Activated CD4-positive, alpha-beta T cell treated with anti-CD3 and anti-CD28 coated beads, Interleukin-2, amount 10 ng/mL, durations not matched to agents 7 days and 5 days (primary cell): ENCODE measurements at regions of chr22 and their contacts with region 1.

Region 1: DNA sequence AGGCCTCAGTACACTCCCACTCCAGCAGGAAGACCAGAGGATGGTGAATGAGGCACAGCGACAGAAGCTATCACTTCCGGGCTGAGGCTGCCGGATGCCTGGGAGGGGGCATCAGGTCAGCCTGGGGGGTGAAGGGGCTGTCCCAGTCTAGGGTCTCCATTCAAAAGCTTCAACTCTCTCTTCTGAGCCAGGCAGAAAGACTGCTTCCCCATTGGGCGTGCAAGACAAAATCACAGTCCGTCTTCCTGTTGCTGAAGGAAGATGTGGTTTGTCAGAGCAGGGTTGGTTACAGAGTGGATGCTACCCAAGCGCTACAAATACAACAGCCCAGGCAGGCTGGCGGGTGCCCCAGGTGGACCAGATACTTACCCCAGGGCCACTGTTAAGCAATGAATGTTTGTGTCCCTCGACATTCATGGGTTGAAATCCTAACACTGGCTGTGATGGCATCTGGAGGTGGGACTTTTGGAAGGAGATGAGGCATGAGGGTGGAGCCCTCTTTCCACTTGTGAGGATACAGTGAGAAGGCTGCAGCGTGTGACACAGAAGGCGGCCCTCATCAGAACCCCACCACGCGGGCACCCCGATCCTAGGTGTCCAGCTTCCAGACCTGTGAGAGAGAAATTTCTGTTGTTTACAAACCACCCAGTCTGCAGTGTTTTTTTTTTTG is 12.0 kb downstream of the UPK3A start:
- DNase-seq: peak; percentile 66
- H3K4me3 Mint-ChIP-seq: peak overlapping the region; percentile 42
- H3K27ac Mint-ChIP-seq: peak overlapping the region; percentile 89
- H3K4me1 Mint-ChIP-seq: peaks cover 34% of the 10 kb centered on the region
- H3K27me3 Mint-ChIP-seq: no peaks in the 10 kb centered on the region

Region 2: GRCh38 chr22:45268958-45269844 is 27.6 kb before region 1 on chr22:
- CTCF ChIA-PET with region 1: no interaction called
- POLR2A ChIA-PET with region 1: no interaction called
- DNase-seq: peak; percentile 88
- H3K4me3 Mint-ChIP-seq: peak overlapping the region; percentile 65
- H3K27ac Mint-ChIP-seq: peak overlapping the region; percentile 20
- H3K4me1 Mint-ChIP-seq: peaks cover 6% of the 10 kb centered on the region
- H3K27me3 Mint-ChIP-seq: peaks cover 30% of the 10 kb centered on the region

Region 3: GRCh38 chr22:45308391-45309186 is 11.8 kb after region 1 on chr22:
- CTCF ChIA-PET with region 1: interaction called, 13 read pairs
- POLR2A ChIA-PET with region 1: no interaction called
- DNase-seq: no peak
- H3K4me3 Mint-ChIP-seq: peak overlapping the region; percentile 81
- H3K27ac Mint-ChIP-seq: peak overlapping the region; percentile 95
- H3K4me1 Mint-ChIP-seq: peaks cover 45% of the 10 kb centered on the region
- H3K27me3 Mint-ChIP-seq: no peaks in the 10 kb centered on the region

Region 4: GRCh38 chr22:45336971-45337431 is 40.2 kb after region 1 on chr22:
- CTCF ChIA-PET with region 1: no interaction called
- POLR2A ChIA-PET with region 1: no interaction called
- DNase-seq: no peak
- H3K4me3 Mint-ChIP-seq: no peak overlapping the region
- H3K27ac Mint-ChIP-seq: no peak overlapping the region
- H3K4me1 Mint-ChIP-seq: peaks cover 42% of the 10 kb centered on the region
- H3K27me3 Mint-ChIP-seq: no peaks in the 10 kb centered on the region

Region 5: GRCh38 chr22:45376703-45377102 is 79.9 kb after region 1 on chr22:
- CTCF ChIA-PET with region 1: no interaction called
- POLR2A ChIA-PET with region 1: no interaction called
- DNase-seq: no peak
- H3K4me3 Mint-ChIP-seq: no peak overlapping the region
- H3K27ac Mint-ChIP-seq: no peak overlapping the region
- H3K4me1 Mint-ChIP-seq: peaks cover 6% of the 10 kb centered on the region
- H3K27me3 Mint-ChIP-seq: peaks cover 10% of the 10 kb centered on the region